ENCODE measurements at regions of chr1 and their contacts with region 1.

Region 1: DNA sequence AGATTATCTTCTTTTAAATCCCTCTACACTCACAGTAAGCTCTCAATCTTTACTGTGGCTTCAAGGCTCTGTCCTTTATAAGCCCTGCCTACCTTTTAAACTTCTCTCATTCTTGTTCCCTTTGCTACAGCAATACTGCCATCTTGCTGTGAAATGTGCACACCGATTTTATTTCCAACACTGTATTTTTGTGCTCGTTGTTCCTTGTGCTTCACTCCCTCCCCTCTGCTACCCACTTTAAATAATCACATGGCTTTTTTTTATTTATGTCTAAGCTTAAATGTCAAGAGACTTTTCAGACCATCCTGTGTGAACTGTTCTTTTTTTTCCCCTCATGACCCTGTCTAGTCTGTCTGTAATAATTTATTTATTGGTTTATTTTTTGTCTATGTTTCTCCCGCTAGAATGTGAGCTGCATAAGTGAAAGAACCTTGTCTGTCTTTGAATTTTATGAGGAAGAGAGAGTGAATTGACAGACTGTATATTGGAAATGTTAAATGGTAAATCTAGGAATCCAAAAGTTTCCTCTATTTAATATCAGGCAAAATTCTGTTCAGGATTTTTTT is 45.7 kb downstream of the ABCD3 start:
- DNase-seq: peak; percentile 39 to 56
- H3K4me3 ChIP-seq: no peak overlapping the region
- H3K4me3 Mint-ChIP-seq: peak overlapping the region; percentile 46
- H3K27ac Mint-ChIP-seq: peak overlapping the region; percentile 82
- H3K4me1 ChIP-seq: peaks cover 40% of the 10 kb centered on the region
- H3K4me1 Mint-ChIP-seq: peaks cover 29% of the 10 kb centered on the region
- H3K27me3 ChIP-seq: no peaks in the 10 kb centered on the region
- H3K27me3 Mint-ChIP-seq: no peaks in the 10 kb centered on the region
- CTCF ChIP-seq: peak; percentile 41 to 49

Region 2: GRCh38 chr1:94045465-94046056 is 418.3 kb before region 1 on chr1:
- CTCF ChIA-PET with region 1: interaction called, 5 read pairs
- POLR2A ChIA-PET with region 1: no interaction called
- intact Hi-C with region 1: loop called (anchors 1 kb)
- DNase-seq: peak; percentile 91 to 95
- H3K4me3 ChIP-seq: peak overlapping the region; percentile 12
- H3K4me3 Mint-ChIP-seq: peak overlapping the region; percentile 24
- H3K27ac Mint-ChIP-seq: peak overlapping the region; percentile 68
- H3K4me1 ChIP-seq: peaks cover 9% of the 10 kb centered on the region; the same call in 1 of the 2 replicates
- H3K4me1 Mint-ChIP-seq: peaks cover 7% of the 10 kb centered on the region
- H3K27me3 ChIP-seq: no peaks in the 10 kb centered on the region
- H3K27me3 Mint-ChIP-seq: no peaks in the 10 kb centered on the region
- CTCF ChIP-seq: peak; percentile 40 to 73

Region 3: GRCh38 chr1:94247138-94248094 is 216.4 kb before region 1 on chr1:
- CTCF ChIA-PET with region 1: no interaction called
- POLR2A ChIA-PET with region 1: no interaction called
- intact Hi-C with region 1: loop called (anchors 2 kb)
- DNase-seq: peak; percentile 82 to 92
- H3K4me3 ChIP-seq: peak overlapping the region; percentile 58
- H3K4me3 Mint-ChIP-seq: peak overlapping the region; percentile 98
- H3K27ac Mint-ChIP-seq: peak overlapping the region; percentile 85
- H3K4me1 ChIP-seq: peaks cover 27% of the 10 kb centered on the region; the same call in 1 of the 2 replicates
- H3K4me1 Mint-ChIP-seq: peaks cover 26% of the 10 kb centered on the region
- H3K27me3 ChIP-seq: no peaks in the 10 kb centered on the region
- H3K27me3 Mint-ChIP-seq: no peaks in the 10 kb centered on the region
- CTCF ChIP-seq: no peak

Region 4: DNA sequence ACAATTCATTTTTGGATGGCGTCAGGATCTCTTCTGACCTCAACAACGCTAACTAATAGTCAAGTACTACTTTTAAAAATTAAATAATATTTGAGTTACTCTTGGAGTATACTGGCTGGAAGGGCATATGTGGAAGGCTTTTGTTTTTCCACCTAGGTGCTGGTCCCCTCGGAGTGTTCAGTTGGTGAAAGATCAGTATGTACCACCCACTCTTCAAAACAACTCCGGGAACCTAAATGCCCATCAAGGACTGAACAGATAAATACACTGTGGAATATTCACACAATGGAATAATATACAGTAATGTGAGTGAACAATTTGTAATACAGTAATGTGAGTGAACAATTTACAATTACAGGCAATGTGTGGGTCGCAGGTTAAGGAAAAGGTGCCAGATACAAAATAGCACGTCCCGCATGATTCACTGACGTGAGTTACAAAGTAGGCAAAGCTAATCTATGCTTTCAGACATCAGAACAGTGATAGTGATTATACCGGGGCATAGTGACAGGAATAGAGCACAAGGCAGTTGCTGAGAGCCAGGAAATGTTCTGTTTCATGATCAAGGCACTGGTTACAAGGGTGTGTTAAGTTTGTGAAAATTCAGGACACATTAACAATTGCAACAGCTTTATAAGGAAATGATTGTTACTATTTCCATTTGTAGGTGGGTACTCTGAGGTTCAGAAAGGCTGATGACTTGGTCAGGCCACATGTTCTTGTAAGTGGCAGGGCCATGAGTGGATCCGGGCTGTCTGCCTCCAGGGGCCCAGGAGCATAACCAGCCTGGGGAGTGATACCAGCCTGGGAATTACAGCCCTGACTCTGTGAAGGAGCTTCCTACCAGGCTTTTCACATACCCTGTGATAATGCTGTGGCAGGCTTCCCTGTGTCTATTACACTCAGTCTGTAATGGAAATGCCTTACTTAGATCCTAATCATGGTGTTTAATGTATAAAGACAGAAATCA is 104.9 kb before region 1 on chr1:
- CTCF ChIA-PET with region 1: interaction called, 5 read pairs
- POLR2A ChIA-PET with region 1: no interaction called
- intact Hi-C with region 1: loop called (anchors 5 kb)
- DNase-seq: no peak
- H3K4me3 ChIP-seq: no peak overlapping the region
- H3K4me3 Mint-ChIP-seq: no peak overlapping the region
- H3K27ac Mint-ChIP-seq: no peak overlapping the region
- H3K4me1 ChIP-seq: peaks cover 37% of the 10 kb centered on the region
- H3K4me1 Mint-ChIP-seq: peaks cover 25% of the 10 kb centered on the region
- H3K27me3 ChIP-seq: no peaks in the 10 kb centered on the region
- H3K27me3 Mint-ChIP-seq: no peaks in the 10 kb centered on the region
- CTCF ChIP-seq: no peak

Region 5: GRCh38 chr1:94396356-94397010 is 67.4 kb before region 1 on chr1:
- CTCF ChIA-PET with region 1: interaction called, 16 read pairs
- POLR2A ChIA-PET with region 1: no interaction called
- intact Hi-C with region 1: loop called (anchors 1 kb)
- DNase-seq: peak in 1 of 2 experiments; percentile 26
- H3K4me3 ChIP-seq: no peak overlapping the region
- H3K4me3 Mint-ChIP-seq: no peak overlapping the region
- H3K27ac Mint-ChIP-seq: no peak overlapping the region
- H3K4me1 ChIP-seq: peaks cover 16% of the 10 kb centered on the region
- H3K4me1 Mint-ChIP-seq: peaks cover 17% of the 10 kb centered on the region
- H3K27me3 ChIP-seq: no peaks in the 10 kb centered on the region
- H3K27me3 Mint-ChIP-seq: no peaks in the 10 kb centered on the region
- CTCF ChIP-seq: peak in 1 of 2 experiments; percentile 11